ENCODE measurements at regions of chr3 and their contacts with region 1.

Region 1: DNA sequence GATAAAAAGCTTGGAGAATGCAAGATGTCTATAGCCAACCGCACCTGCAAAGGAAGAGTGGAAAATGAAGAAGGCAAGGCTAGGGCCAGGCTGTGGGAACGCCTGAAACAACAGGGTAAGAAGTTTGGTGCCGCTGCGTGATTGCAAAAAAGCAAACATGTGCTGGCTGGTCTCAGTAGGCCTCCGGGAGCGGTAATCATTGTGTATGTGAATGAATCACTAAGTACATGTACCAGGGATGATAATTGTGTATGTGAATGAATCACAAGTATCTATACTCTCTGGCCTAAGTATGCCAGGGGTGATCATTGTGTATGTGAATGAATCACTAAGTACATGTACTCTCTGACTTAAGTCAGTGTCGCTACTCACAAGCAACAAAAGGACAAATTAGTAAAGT is 40.3 kb upstream of the PARL start:
- ATAC-seq: no peak
- H3K4me3 ChIP-seq: no peak overlapping the region
- H3K27ac ChIP-seq: no peak overlapping the region
- H3K4me1 ChIP-seq: no peaks in the 10 kb centered on the region

Region 2: GRCh38 chr3:184110316-184110725 is 185.4 kb after region 1 on chr3:
- in situ Hi-C with region 1: loop called in 1 of 9 experiments (anchors 25 kb)
- ATAC-seq: peak in 3 of 8 experiments; percentile 27 to 36 (median 36)
- H3K4me3 ChIP-seq: no peak overlapping the region
- H3K27ac ChIP-seq: no peak overlapping the region
- H3K4me1 ChIP-seq: no peaks in the 10 kb centered on the region

Region 3: GRCh38 chr3:184250167-184250828 is 325.3 kb after region 1 on chr3:
- in situ Hi-C with region 1: loop called in 1 of 9 experiments (anchors 25 kb)
- ATAC-seq: peak; percentile 36 to 52 (median 45)
- H3K4me3 ChIP-seq: peak overlapping the region; percentile 70 to 96 (median 80)
- H3K27ac ChIP-seq: peak overlapping the region; percentile 77 to 98
- H3K4me1 ChIP-seq: peaks cover 7 to 9% of the 10 kb centered on the region in 2 donors

Region 4: GRCh38 chr3:184298759-184299496 is 374.0 kb after region 1 on chr3 and contains the start of gene PSMD2:
- in situ Hi-C with region 1: loop called in 1 of 9 experiments (anchors 25 kb)
- ATAC-seq: peak; percentile 92 to 97 (median 95)
- H3K4me3 ChIP-seq: peak within 1 kb of the TSS; percentile 58 to 86 (median 73)
- H3K27ac ChIP-seq: peak within 1 kb of the TSS; percentile 67 to 72
- H3K4me1 ChIP-seq: peaks cover 5 to 11% of the 10 kb centered on the region in 2 donors
- total RNA-seq, gene PSMD2: 130 to 248 (median 185) TPM